Caco-2 (cell line): ENCODE measurements at regions of chr11 and their contacts with region 1.

Region 1: DNA sequence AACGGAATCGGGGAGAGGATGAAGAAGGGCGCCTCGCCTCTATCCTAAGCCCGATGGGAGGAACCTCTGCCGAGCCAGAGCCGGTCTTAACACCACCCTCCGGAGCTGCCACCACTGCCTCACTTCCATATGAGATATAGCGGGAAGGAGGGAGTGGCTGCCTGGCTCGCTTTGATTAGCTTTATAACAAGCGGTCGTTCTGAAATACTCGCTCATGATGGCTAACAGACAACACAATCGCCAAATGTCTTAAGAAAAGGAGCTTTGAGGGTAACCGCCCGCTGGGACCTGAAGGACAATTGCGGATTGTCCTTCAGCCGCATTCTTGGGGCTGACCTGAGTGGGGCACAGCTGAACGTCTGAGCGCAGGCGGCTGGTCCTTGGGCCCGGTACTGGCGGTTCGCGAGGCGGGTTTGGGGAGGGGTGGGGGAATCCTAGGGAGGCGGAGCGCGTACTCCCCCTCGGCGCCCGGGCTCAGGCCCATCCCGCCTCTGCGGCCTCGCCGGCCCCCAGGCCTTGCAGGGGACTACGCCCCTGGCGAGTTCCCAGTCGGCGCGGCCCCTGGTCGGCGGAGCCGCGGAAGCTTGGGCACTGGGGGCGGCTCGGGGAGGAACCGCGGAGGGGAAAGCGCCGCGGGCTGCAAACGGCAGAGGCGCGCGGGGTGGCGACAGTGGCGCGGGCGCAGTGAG is at the start of gene PLAAT5:
- DNase-seq: peak in 1 of 2 experiments; percentile 29
- H3K4me3 ChIP-seq: peak within 1 kb of the TSS; percentile 36
- H3K4me3 Mint-ChIP-seq: peak within 1 kb of the TSS; percentile 78
- H3K27ac Mint-ChIP-seq: peak within 1 kb of the TSS; percentile 89
- H3K4me1 ChIP-seq: peaks cover 18% of the 10 kb centered on the region
- H3K4me1 Mint-ChIP-seq: peaks cover 18% of the 10 kb centered on the region
- H3K27me3 ChIP-seq: no peaks in the 10 kb centered on the region
- H3K27me3 Mint-ChIP-seq: no peaks in the 10 kb centered on the region
- CTCF ChIP-seq: no peak
- total RNA-seq, gene PLAAT5: 1.2 and 2.3 TPM in 2 replicates

Region 2: DNA sequence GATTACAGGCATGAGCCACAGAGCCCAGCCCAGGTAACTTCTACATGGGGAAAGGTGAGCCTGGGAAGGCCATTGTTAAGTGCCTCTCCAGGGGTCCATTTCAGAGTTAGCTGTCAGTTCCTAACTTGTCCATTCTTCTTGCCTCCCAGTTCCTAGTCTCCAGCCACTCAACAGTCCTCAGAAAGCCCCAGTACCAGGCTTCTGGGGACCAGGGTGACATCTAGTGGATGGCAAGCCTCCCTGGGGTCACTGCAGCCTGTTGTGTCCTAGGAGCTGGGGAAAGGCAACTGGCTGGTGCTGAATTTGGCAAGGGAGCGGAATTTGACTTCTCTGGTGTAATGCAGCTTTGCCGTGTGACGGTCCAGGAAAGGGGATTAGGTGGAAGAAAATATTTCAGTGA is 17.3 kb after region 1 on chr11:
- CTCF ChIA-PET with region 1: interaction called, 22 read pairs
- POLR2A ChIA-PET with region 1: no interaction called
- intact Hi-C with region 1: no loop called
- DNase-seq: peak; percentile 77 to 82
- H3K4me3 ChIP-seq: no peak overlapping the region
- H3K4me3 Mint-ChIP-seq: no peak overlapping the region
- H3K27ac Mint-ChIP-seq: no peak overlapping the region
- H3K4me1 ChIP-seq: peaks cover 7% of the 10 kb centered on the region
- H3K4me1 Mint-ChIP-seq: no peaks in the 10 kb centered on the region
- H3K27me3 ChIP-seq: no peaks in the 10 kb centered on the region
- H3K27me3 Mint-ChIP-seq: no peaks in the 10 kb centered on the region
- CTCF ChIP-seq: peak; percentile 62 to 92

Region 3: DNA sequence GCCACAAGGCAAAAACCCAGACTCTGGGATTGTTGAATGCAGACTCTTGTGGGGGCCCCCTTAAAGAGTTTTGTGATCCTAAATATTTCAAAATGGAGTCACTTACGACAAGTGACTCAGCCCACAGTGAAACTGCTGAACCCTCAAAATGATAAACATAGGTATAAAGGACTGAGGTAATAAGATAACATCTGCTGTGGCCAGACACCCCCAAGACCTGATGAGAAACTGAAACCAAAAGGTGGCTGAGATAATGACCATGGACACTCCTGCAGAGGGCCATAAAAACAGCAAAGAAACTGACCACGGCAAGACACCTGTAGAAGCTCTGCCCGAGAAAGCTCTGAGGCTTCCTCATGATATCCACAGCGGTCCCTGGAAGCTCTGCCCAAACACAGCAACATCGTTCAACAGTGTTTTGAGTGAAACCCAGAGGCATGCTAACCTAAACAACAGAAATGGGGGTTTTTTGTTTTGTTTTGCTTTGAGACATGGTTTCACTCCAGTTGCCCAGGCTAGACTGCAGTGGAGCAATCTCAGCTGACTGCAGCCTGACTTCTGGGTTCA is 44.3 kb after region 1 on chr11:
- CTCF ChIA-PET with region 1: no interaction called
- POLR2A ChIA-PET with region 1: no interaction called
- intact Hi-C with region 1: loop called (anchors 5 kb)
- DNase-seq: no peak
- H3K4me3 ChIP-seq: no peak overlapping the region
- H3K4me3 Mint-ChIP-seq: no peak overlapping the region
- H3K27ac Mint-ChIP-seq: no peak overlapping the region
- H3K4me1 ChIP-seq: peaks cover 47% of the 10 kb centered on the region
- H3K4me1 Mint-ChIP-seq: peaks cover 35% of the 10 kb centered on the region
- H3K27me3 ChIP-seq: no peaks in the 10 kb centered on the region
- H3K27me3 Mint-ChIP-seq: no peaks in the 10 kb centered on the region
- CTCF ChIP-seq: no peak

Region 4: DNA sequence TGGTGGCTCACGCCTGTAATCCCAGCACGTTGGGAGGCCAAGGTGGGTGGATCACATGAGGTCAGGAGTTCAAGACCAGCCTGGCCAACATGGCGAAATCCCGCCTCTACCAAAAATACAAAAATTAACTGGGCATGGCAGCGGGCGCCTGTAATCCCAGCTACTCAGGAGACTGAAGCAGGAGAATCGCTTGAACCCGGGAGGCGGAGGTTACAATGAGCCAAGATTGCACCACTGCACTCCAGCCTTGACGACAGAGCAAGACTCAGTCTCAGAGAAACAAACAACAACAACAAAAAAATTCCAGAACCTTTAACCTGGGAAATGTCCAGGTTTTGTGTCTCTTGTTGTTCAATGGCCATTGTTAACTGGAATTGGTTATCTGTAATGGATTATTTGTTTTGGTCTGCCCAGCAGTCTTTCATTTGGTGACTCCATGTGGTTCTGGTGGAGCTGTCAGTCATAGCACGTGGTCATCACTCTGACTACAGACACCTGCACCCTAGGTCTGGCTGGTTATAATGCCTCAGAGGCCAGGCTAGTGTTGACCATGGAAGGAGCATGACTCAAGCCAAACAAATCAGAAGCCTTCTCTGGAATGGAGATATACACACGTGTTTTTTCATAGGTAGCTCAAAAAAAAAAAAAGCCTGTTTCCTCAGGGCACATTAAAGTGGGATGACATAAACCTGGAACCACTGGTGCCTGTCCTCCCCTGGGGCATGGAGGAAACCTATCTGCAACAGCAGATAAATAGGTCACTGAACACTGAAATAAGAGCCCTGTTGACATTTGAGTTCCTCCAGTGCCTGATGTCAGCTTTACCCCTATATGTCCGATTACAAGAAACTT is 131.5 kb after region 1 on chr11:
- CTCF ChIA-PET with region 1: no interaction called
- POLR2A ChIA-PET with region 1: no interaction called
- intact Hi-C with region 1: loop called (anchors 2 kb)
- DNase-seq: peak; percentile 77 to 86
- H3K4me3 ChIP-seq: no peak overlapping the region
- H3K4me3 Mint-ChIP-seq: no peak overlapping the region
- H3K27ac Mint-ChIP-seq: peak overlapping the region; percentile 69
- H3K4me1 ChIP-seq: peaks cover 53% of the 10 kb centered on the region
- H3K4me1 Mint-ChIP-seq: peaks cover 41% of the 10 kb centered on the region
- H3K27me3 ChIP-seq: no peaks in the 10 kb centered on the region
- H3K27me3 Mint-ChIP-seq: no peaks in the 10 kb centered on the region
- CTCF ChIP-seq: no peak